ENCODE measurements at regions of chr14 and their contacts with region 1.

Region 1: GRCh38 chr14:95774265-95775160 is 60.6 kb upstream of the TCL1A start:
- DNase-seq: peak; percentile 53 to 62
- H3K4me3 ChIP-seq: no peak overlapping the region
- H3K4me3 Mint-ChIP-seq: no peak overlapping the region
- H3K27ac Mint-ChIP-seq: no peak overlapping the region
- H3K4me1 ChIP-seq: no peaks in the 10 kb centered on the region
- H3K4me1 Mint-ChIP-seq: no peaks in the 10 kb centered on the region
- H3K27me3 ChIP-seq: no peaks in the 10 kb centered on the region
- H3K27me3 Mint-ChIP-seq: peaks cover 20% of the 10 kb centered on the region
- CTCF ChIP-seq: peak; percentile 75 to 79

Region 2: GRCh38 chr14:95808371-95808770 is 33.9 kb after region 1 on chr14:
- CTCF ChIA-PET with region 1: no interaction called
- POLR2A ChIA-PET with region 1: no interaction called
- intact Hi-C with region 1: no loop called
- DNase-seq: no peak
- H3K4me3 ChIP-seq: no peak overlapping the region
- H3K4me3 Mint-ChIP-seq: no peak overlapping the region
- H3K27ac Mint-ChIP-seq: no peak overlapping the region
- H3K4me1 ChIP-seq: no peaks in the 10 kb centered on the region
- H3K4me1 Mint-ChIP-seq: no peaks in the 10 kb centered on the region
- H3K27me3 ChIP-seq: no peaks in the 10 kb centered on the region; the same call in 1 of the 2 replicates
- H3K27me3 Mint-ChIP-seq: peaks cover 11% of the 10 kb centered on the region
- CTCF ChIP-seq: no peak

Region 3: GRCh38 chr14:96507723-96508122 is 733.2 kb after region 1 on chr14:
- CTCF ChIA-PET with region 1: no interaction called
- POLR2A ChIA-PET with region 1: interaction called, 14 read pairs
- intact Hi-C with region 1: no loop called
- DNase-seq: no peak
- H3K4me3 ChIP-seq: no peak overlapping the region
- H3K4me3 Mint-ChIP-seq: no peak overlapping the region
- H3K27ac Mint-ChIP-seq: no peak overlapping the region
- H3K4me1 ChIP-seq: peaks cover 40% of the 10 kb centered on the region
- H3K4me1 Mint-ChIP-seq: peaks cover 30% of the 10 kb centered on the region
- H3K27me3 ChIP-seq: no peaks in the 10 kb centered on the region
- H3K27me3 Mint-ChIP-seq: no peaks in the 10 kb centered on the region
- CTCF ChIP-seq: no peak

Measured in Caco-2 (cell line).